ENCODE measurements at regions of chr3 and their contacts with region 1.

Region 1: GRCh38 chr3:13648060-13649001 is 99.4 kb downstream of the FBLN2 start:
- DNase-seq: peak; percentile 80
- ATAC-seq: peak; percentile 61
- H3K4me3 Mint-ChIP-seq: no peak overlapping the region
- H3K27ac Mint-ChIP-seq: no peak overlapping the region
- H3K4me1 Mint-ChIP-seq: peaks cover 18% of the 10 kb centered on the region
- H3K27me3 Mint-ChIP-seq: peaks cover 44% of the 10 kb centered on the region

Region 2: GRCh38 chr3:13479581-13480339 is 168.6 kb before region 1 on chr3 and contains the start of gene HDAC11:
- CTCF ChIA-PET with region 1: interaction called, 29 read pairs
- DNase-seq: peak; percentile 99
- ATAC-seq: peak; percentile 96
- H3K4me3 Mint-ChIP-seq: peak within 1 kb of the TSS; percentile 83
- H3K27ac Mint-ChIP-seq: peak within 1 kb of the TSS; percentile 86
- H3K4me1 Mint-ChIP-seq: peaks cover 10% of the 10 kb centered on the region
- H3K27me3 Mint-ChIP-seq: peaks cover 11% of the 10 kb centered on the region
- total RNA-seq, gene HDAC11: 0.70 to 1.2 TPM

Region 3: GRCh38 chr3:13495921-13496723 is 152.2 kb before region 1 on chr3:
- CTCF ChIA-PET with region 1: interaction called, 322 read pairs
- DNase-seq: peak; percentile 83
- ATAC-seq: peak; percentile 92
- H3K4me3 Mint-ChIP-seq: no peak overlapping the region
- H3K27ac Mint-ChIP-seq: no peak overlapping the region
- H3K4me1 Mint-ChIP-seq: peaks cover 8% of the 10 kb centered on the region
- H3K27me3 Mint-ChIP-seq: no peaks in the 10 kb centered on the region

Region 4: GRCh38 chr3:13559764-13560525 is 88.4 kb before region 1 on chr3:
- CTCF ChIA-PET with region 1: interaction called, 13 read pairs
- DNase-seq: no peak
- ATAC-seq: no peak
- H3K4me3 Mint-ChIP-seq: no peak overlapping the region
- H3K27ac Mint-ChIP-seq: no peak overlapping the region
- H3K4me1 Mint-ChIP-seq: peaks cover 7% of the 10 kb centered on the region
- H3K27me3 Mint-ChIP-seq: peaks cover 46% of the 10 kb centered on the region